PC-9 (cell line): ENCODE measurements at regions of chr6 and their contacts with region 1.

Region 1: GRCh38 chr6:144265390-144265789 is 19.7 kb upstream of the UTRN start:
- DNase-seq: peak; percentile 44 to 58
- H3K4me3 ChIP-seq: no peak overlapping the region
- H3K27ac ChIP-seq: peak overlapping the region; percentile 91
- H3K4me1 ChIP-seq: peaks cover 33% of the 10 kb centered on the region
- H3K27me3 ChIP-seq: no peaks in the 10 kb centered on the region
- CTCF ChIP-seq: no peak

Region 2: GRCh38 chr6:144095331-144096002 is 169.9 kb before region 1 on chr6 and contains the start of gene SF3B5:
- CTCF ChIA-PET with region 1: no interaction called
- POLR2A ChIA-PET with region 1: interaction called, 8 read pairs
- intact Hi-C with region 1: loop called (anchors 1 kb)
- DNase-seq: peak; percentile 95 to 99
- H3K4me3 ChIP-seq: peak within 1 kb of the TSS; percentile 68
- H3K27ac ChIP-seq: peak within 1 kb of the TSS; percentile 73
- H3K4me1 ChIP-seq: peaks cover 17% of the 10 kb centered on the region; the same call in 1 of the 2 replicates
- H3K27me3 ChIP-seq: no peaks in the 10 kb centered on the region
- CTCF ChIP-seq: no peak
- total RNA-seq, gene SF3B5: 125 and 127 TPM in 2 replicates

Region 3: DNA sequence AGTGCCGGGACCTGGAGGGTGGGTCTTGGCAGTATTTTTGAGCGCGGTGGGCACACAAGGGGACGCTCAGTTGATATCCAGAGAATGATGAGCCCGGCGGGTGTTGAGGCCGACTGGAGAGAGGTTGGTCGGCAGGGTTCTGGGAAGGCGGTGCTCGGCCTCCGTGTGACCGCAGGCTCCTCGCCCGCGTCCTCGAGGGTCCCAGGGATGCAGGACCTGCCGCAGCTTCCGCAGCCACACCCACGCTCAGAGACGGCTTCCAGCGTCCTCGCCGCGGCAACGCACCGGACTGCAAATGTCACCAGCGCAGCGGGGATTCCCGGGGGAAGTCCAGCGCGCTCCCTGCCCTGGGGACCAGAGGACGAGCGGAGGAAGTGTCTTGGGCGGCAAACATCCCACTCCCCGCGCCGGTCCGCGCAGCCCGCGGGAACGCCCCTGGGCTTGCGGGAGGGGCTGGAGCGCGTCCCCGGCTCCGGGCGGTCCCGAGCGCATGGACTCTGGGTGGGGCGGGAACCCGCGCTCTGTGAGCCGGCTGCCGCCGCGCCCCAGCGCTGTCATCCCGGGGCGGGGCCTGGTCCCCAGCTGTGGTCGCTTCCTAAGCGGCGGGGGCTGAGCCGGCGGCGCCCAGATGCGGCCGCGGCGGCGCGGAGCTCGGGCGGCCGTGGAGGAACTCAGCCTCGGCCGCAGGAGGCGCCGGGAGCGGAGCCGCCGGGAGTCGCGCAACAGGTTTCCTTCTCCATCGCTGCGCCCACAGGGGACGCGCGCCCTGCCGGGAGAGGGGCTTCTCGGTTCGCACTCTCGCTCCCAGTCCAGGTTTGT is 115.3 kb before region 1 on chr6 and contains the start of gene STX11:
- CTCF ChIA-PET with region 1: no interaction called
- POLR2A ChIA-PET with region 1: no interaction called
- intact Hi-C with region 1: loop called (anchors 5 kb)
- DNase-seq: peak in 1 of 2 experiments; percentile 64
- H3K4me3 ChIP-seq: peak within 1 kb of the TSS; percentile 76
- H3K27ac ChIP-seq: peak within 1 kb of the TSS; percentile 38; the same call in 1 of the 2 replicates
- H3K4me1 ChIP-seq: peaks cover 11% of the 10 kb centered on the region; the same call in 1 of the 2 replicates
- H3K27me3 ChIP-seq: no peaks in the 10 kb centered on the region
- CTCF ChIP-seq: no peak
- total RNA-seq, gene STX11: 0.17 and 0.40 TPM in 2 replicates

Region 4: DNA sequence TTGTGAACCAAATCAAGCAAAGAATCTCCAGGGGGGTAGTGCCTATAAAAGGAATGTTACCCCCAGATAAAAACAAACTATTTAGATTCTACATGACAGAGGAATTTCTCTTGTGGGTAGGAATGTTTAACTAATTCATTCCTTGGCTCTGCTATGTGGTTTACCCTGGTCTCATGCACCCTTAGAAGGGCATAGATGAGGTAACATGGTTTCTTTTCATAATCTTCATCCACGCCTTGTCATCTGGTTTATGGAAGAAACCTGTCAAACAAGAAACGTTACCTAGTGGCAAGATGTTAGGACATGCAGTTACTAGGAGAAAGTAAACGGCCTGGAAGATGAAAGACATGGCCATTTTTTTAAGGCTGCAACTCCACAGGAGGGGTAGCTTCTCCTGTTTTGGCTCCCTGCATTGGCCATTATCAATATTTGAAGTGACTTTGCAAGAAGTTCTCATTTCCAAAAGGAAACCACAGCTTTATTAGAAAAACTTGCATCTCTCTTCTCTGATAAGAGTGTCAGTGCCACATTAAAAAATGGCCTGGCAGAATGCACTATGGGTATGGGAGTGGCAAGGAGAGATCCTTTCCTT is 69.6 kb before region 1 on chr6:
- CTCF ChIA-PET with region 1: no interaction called
- POLR2A ChIA-PET with region 1: no interaction called
- intact Hi-C with region 1: loop called (anchors 1 kb)
- DNase-seq: peak; percentile 25 to 95
- H3K4me3 ChIP-seq: no peak overlapping the region
- H3K27ac ChIP-seq: no peak overlapping the region
- H3K4me1 ChIP-seq: peaks cover 13% of the 10 kb centered on the region; the same call in 1 of the 2 replicates
- H3K27me3 ChIP-seq: no peaks in the 10 kb centered on the region
- CTCF ChIP-seq: no peak

Region 5: GRCh38 chr6:144330017-144330985 is 64.9 kb after region 1 on chr6:
- CTCF ChIA-PET with region 1: no interaction called
- POLR2A ChIA-PET with region 1: no interaction called
- intact Hi-C with region 1: loop called (anchors 2 kb)
- DNase-seq: peak; percentile 91 to 97
- H3K4me3 ChIP-seq: peak overlapping the region; percentile 68
- H3K27ac ChIP-seq: peak overlapping the region; percentile 78
- H3K4me1 ChIP-seq: peaks cover 35% of the 10 kb centered on the region
- H3K27me3 ChIP-seq: no peaks in the 10 kb centered on the region
- CTCF ChIP-seq: no peak

Region 6: GRCh38 chr6:144362042-144363018 is 96.9 kb after region 1 on chr6:
- CTCF ChIA-PET with region 1: no interaction called
- POLR2A ChIA-PET with region 1: interaction called, 8 read pairs
- intact Hi-C with region 1: loop called (anchors 5 kb)
- DNase-seq: peak; percentile 79 to 88
- H3K4me3 ChIP-seq: no peak overlapping the region
- H3K27ac ChIP-seq: peak overlapping the region; percentile 90
- H3K4me1 ChIP-seq: peaks cover 49% of the 10 kb centered on the region
- H3K27me3 ChIP-seq: no peaks in the 10 kb centered on the region
- CTCF ChIP-seq: no peak